ENCODE measurements at regions of chr12 and their contacts with region 1.

Region 1: DNA sequence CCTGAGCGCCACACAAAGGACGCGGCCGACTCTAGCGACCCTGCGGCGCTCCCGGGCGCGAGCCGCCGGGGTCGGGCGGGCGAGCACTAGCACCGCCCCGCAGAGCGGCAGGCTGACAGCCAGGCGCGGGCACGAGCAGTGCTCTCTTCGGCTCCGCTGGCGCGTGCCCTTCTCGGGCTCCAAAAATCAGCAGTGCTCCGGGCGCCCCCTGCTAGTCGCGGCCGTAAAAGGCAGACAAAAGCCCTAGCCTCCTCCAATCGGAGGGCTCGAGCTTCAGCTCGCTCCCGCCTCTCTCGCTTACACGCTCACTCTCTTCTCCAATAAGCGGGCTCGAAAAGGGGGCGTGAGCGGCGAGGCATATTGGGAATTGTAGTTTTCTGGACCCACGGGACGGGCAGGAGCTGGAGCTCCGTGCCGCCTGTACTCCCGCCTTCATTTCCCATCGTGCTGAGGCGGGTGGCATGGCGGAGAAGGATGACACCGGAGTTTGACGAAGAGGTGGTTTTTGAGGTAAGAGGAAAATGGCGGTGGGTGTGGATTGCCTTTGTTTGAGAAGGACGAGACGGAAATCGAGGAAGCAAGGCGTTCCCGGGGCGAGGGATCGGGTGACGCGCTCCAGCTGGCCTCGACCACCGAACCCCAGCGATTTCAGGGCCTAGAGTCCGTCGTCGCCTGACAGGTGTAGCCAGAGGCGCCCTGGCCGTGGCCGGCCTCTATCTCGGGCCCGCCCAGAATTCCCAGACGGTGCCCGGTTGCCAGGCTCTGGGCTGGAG is at the starts of genes FGD6 and VEZT:
- DNase-seq: peak; percentile 96
- ATAC-seq: peak; percentile 93
- H3K4me3 ChIP-seq: peak within 1 kb of the TSS; percentile 93 to 94
- H3K27ac ChIP-seq: peak within 1 kb of the TSS; percentile 97
- H3K4me1 ChIP-seq: peaks cover 30% of the 10 kb centered on the region
- H3K27me3 ChIP-seq: no peaks in the 10 kb centered on the region
- CTCF ChIP-seq: peak; percentile 88
- total RNA-seq, gene FGD6: 28.3 TPM
- total RNA-seq, gene VEZT: 70.6 TPM

Region 2: DNA sequence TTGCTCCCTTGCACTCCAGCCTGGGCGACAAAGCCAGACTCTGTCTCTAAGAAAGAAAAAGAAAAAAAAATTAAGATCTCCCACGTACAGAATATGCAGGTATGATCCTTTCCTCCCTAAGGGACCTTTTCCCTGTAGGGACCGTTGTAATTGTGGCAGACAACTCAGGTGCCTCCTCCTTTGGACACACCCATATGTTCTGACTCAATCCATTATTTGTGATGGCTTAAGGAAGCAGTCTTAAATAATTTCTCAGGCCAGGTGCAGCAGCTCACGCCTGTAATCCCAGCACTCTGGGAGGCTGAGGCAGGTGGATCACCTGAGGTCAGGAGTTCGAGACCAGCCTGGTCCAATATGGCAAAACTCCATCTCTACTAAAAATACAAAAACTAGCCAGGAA is 620.3 kb before region 1 on chr12:
- CTCF ChIA-PET with region 1: no interaction called
- POLR2A ChIA-PET with region 1: interaction called, 10 read pairs
- in situ Hi-C with region 1: no loop called
- intact Hi-C with region 1: no loop called
- DNase-seq: no peak
- ATAC-seq: no peak
- H3K4me3 ChIP-seq: no peak overlapping the region
- H3K27ac ChIP-seq: no peak overlapping the region
- H3K4me1 ChIP-seq: no peaks in the 10 kb centered on the region
- H3K27me3 ChIP-seq: peaks cover 5% of the 10 kb centered on the region; the same call in 1 of the 2 replicates
- CTCF ChIP-seq: no peak

Region 3: GRCh38 chr12:95248604-95249360 is 31.2 kb after region 1 on chr12:
- CTCF ChIA-PET with region 1: no interaction called
- POLR2A ChIA-PET with region 1: no interaction called
- in situ Hi-C with region 1: no loop called
- intact Hi-C with region 1: no loop called
- DNase-seq: no peak
- ATAC-seq: no peak
- H3K4me3 ChIP-seq: no peak overlapping the region
- H3K27ac ChIP-seq: no peak overlapping the region
- H3K4me1 ChIP-seq: peaks cover 2% of the 10 kb centered on the region; the same call in 1 of the 2 replicates
- H3K27me3 ChIP-seq: no peaks in the 10 kb centered on the region
- CTCF ChIP-seq: no peak